ENCODE measurements at regions of chr13 and their contacts with region 1.

Region 1: GRCh38 chr13:41193919-41194824 is at the start of gene KBTBD7:
- DNase-seq: peak; percentile 89
- ATAC-seq: peak; percentile 96
- H3K4me3 ChIP-seq: peak within 1 kb of the TSS; percentile 59
- H3K27ac ChIP-seq: peak within 1 kb of the TSS; percentile 58
- H3K4me1 ChIP-seq: peaks cover 18% of the 10 kb centered on the region
- H3K27me3 ChIP-seq: no peaks in the 10 kb centered on the region
- CTCF ChIP-seq: no peak
- total RNA-seq, gene KBTBD7: 1.0 and 1.6 TPM in 2 replicates

Region 2: GRCh38 chr13:40974460-40975407 is 219.4 kb before region 1 on chr13:
- CTCF ChIA-PET with region 1: no interaction called
- POLR2A ChIA-PET with region 1: no interaction called
- intact Hi-C with region 1: no loop called
- DNase-seq: peak; percentile 37
- ATAC-seq: peak; percentile 59
- H3K4me3 ChIP-seq: no peak overlapping the region
- H3K27ac ChIP-seq: 0 out of 2 replicates have a peak overlapping the region, but pooled peaks have one; percentile 7
- H3K4me1 ChIP-seq: peaks cover 8% of the 10 kb centered on the region
- H3K27me3 ChIP-seq: no peaks in the 10 kb centered on the region
- CTCF ChIP-seq: peak; percentile 61

Region 3: GRCh38 chr13:41075034-41075433 is 119.1 kb before region 1 on chr13:
- CTCF ChIA-PET with region 1: no interaction called
- POLR2A ChIA-PET with region 1: no interaction called
- intact Hi-C with region 1: loop called (anchors 1 kb)
- DNase-seq: peak; percentile 46
- ATAC-seq: no peak
- H3K4me3 ChIP-seq: no peak overlapping the region
- H3K27ac ChIP-seq: no peak overlapping the region
- H3K4me1 ChIP-seq: no peaks in the 10 kb centered on the region
- H3K27me3 ChIP-seq: no peaks in the 10 kb centered on the region
- CTCF ChIP-seq: peak; percentile 61

Region 4: DNA sequence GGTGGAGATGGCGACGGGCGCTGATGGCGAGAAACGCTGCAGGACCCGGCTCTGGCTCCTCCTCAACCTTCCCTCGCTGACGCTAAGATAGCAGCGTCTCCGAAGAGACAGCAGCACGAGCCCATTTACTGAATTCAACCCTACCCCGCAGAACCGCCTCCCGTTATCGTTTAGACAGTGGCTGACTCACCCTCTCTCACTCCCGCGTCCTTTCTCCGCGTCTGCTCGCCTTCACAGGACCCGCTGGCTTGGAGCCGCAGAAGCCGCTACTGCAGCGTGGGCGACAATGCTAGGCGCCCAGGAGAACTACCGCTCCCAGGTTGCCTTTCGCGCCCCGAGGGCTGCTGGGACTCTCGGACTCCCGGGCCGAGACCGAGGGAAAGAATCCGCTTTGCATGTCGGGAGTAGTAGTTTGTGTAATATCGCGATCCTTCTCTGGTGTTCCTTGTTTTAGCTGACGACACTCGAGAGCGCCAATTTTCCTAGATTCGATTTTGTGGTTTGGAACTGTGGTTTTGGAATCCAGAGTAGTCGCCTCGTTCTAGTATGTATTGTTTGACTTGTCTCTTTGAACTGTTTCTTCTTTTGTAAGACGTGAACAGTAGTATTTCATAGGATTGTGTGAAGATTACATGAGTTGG is 61.5 kb before region 1 on chr13 and contains the start of gene KBTBD6:
- CTCF ChIA-PET with region 1: no interaction called
- POLR2A ChIA-PET with region 1: interaction called, 24 read pairs
- intact Hi-C with region 1: loop called (anchors 1 kb)
- DNase-seq: peak; percentile 98
- ATAC-seq: peak; percentile 95
- H3K4me3 ChIP-seq: peak within 1 kb of the TSS; percentile 85
- H3K27ac ChIP-seq: peak within 1 kb of the TSS; percentile 68
- H3K4me1 ChIP-seq: peaks cover 41% of the 10 kb centered on the region
- H3K27me3 ChIP-seq: no peaks in the 10 kb centered on the region
- CTCF ChIP-seq: no peak
- total RNA-seq, gene KBTBD6: 4.4 and 5.1 TPM in 2 replicates

Region 5: GRCh38 chr13:41137951-41138350 is 56.2 kb before region 1 on chr13:
- CTCF ChIA-PET with region 1: no interaction called
- POLR2A ChIA-PET with region 1: interaction called, 24 read pairs
- intact Hi-C with region 1: no loop called
- DNase-seq: peak; percentile 81
- ATAC-seq: peak; percentile 54
- H3K4me3 ChIP-seq: peak overlapping the region; percentile 41; the same call in 1 of the 2 replicates
- H3K27ac ChIP-seq: peak overlapping the region; percentile 99
- H3K4me1 ChIP-seq: peaks cover 41% of the 10 kb centered on the region
- H3K27me3 ChIP-seq: no peaks in the 10 kb centered on the region
- CTCF ChIP-seq: no peak